K562 (cell line): ENCODE measurements at regions of chr4 and their contacts with region 1.

Region 1: GRCh38 chr4:74531963-74532794 is 87.2 kb downstream of the AREG start:
- DNase-seq: peak; percentile 16 to 82 (median 45)
- ATAC-seq: peak; percentile 93
- H3K4me3 ChIP-seq: no peak overlapping the region
- H3K27ac ChIP-seq: peak overlapping the region; percentile 49; the same call in 2 of the 3 replicates
- H3K4me1 ChIP-seq: peaks cover 0 to 12% of the 10 kb centered on the region in 2 experiments; a peak in 1 of 5 replicates
- H3K27me3 ChIP-seq: no peaks in the 10 kb centered on the region
- CTCF ChIP-seq: peak; percentile 79 to 99 (median 98)
- EP300 ChIP-seq: peak; percentile 89
- POLR2A ChIP-seq: no peak
- RAD21 ChIP-seq: peak; percentile 95 to 96

Region 2: GRCh38 chr4:74311696-74312313 is 220.4 kb before region 1 on chr4:
- CTCF ChIA-PET with region 1: no interaction called
- POLR2A ChIA-PET with region 1: no interaction called
- in situ Hi-C with region 1: loop called (anchors 10 kb)
- intact Hi-C with region 1: no loop called
- DNase-seq: peak in 1 of 4 experiments; percentile 67
- ATAC-seq: peak; percentile 76
- H3K4me3 ChIP-seq: no peak overlapping the region
- H3K27ac ChIP-seq: no peak overlapping the region
- H3K4me1 ChIP-seq: no peaks in the 10 kb centered on the region; a peak in 1 of 5 replicates
- H3K27me3 ChIP-seq: no peaks in the 10 kb centered on the region
- CTCF ChIP-seq: peak; percentile 50 to 81 (median 59); a peak in 5 of 6 replicates
- EP300 ChIP-seq: no peak
- POLR2A ChIP-seq: no peak
- RAD21 ChIP-seq: peak; percentile 78 to 83

Region 3: GRCh38 chr4:74370912-74371311 is 161.3 kb before region 1 on chr4:
- CTCF ChIA-PET with region 1: interaction called, 20 read pairs
- POLR2A ChIA-PET with region 1: interaction called, 3 read pairs
- in situ Hi-C with region 1: loop called (anchors 10 kb)
- intact Hi-C with region 1: no loop called
- DNase-seq: peak; percentile 23 to 85 (median 44)
- ATAC-seq: peak; percentile 84
- H3K4me3 ChIP-seq: no peak overlapping the region
- H3K27ac ChIP-seq: peak overlapping the region; percentile 37; the same call in 1 of the 3 replicates
- H3K4me1 ChIP-seq: peaks cover 0 to 15% of the 10 kb centered on the region in 2 experiments; a peak in 2 of 5 replicates
- H3K27me3 ChIP-seq: no peaks in the 10 kb centered on the region
- CTCF ChIP-seq: peak; percentile 82 to 85 (median 82)
- EP300 ChIP-seq: no peak
- POLR2A ChIP-seq: no peak
- RAD21 ChIP-seq: peak; percentile 78 to 81

Region 4: GRCh38 chr4:74444891-74445642 is 87.1 kb before region 1 on chr4 and contains the start of gene AREG:
- CTCF ChIA-PET with region 1: no interaction called
- POLR2A ChIA-PET with region 1: no interaction called
- in situ Hi-C with region 1: no loop called
- intact Hi-C with region 1: loop called (anchors 1 kb)
- DNase-seq: peak; percentile 78 to 91 (median 84)
- ATAC-seq: peak; percentile 83
- H3K4me3 ChIP-seq: peak within 1 kb of the TSS; percentile 57
- H3K27ac ChIP-seq: peak within 1 kb of the TSS; percentile 74
- H3K4me1 ChIP-seq: peaks cover 7 to 31% of the 10 kb centered on the region in 2 experiments; a peak in 3 of 5 replicates
- H3K27me3 ChIP-seq: no peaks in the 10 kb centered on the region
- CTCF ChIP-seq: peak; percentile 69 to 87 (median 69)
- EP300 ChIP-seq: no peak
- POLR2A ChIP-seq: peak; percentile 62
- RAD21 ChIP-seq: peak in 1 of 2 experiments; percentile 56; a peak in 2 of 4 replicates
- polyA plus RNA-seq, gene AREG: 1.4 to 2.4 TPM

Region 5: GRCh38 chr4:74549936-74550335 is 17.8 kb after region 1 on chr4:
- CTCF ChIA-PET with region 1: no interaction called
- POLR2A ChIA-PET with region 1: no interaction called
- in situ Hi-C with region 1: no loop called
- intact Hi-C with region 1: no loop called
- DNase-seq: no peak
- ATAC-seq: no peak
- H3K4me3 ChIP-seq: no peak overlapping the region
- H3K27ac ChIP-seq: no peak overlapping the region
- H3K4me1 ChIP-seq: no peaks in the 10 kb centered on the region; a peak in 1 of 5 replicates
- H3K27me3 ChIP-seq: no peaks in the 10 kb centered on the region
- CTCF ChIP-seq: no peak
- EP300 ChIP-seq: no peak
- POLR2A ChIP-seq: no peak
- RAD21 ChIP-seq: no peak

Region 6: DNA sequence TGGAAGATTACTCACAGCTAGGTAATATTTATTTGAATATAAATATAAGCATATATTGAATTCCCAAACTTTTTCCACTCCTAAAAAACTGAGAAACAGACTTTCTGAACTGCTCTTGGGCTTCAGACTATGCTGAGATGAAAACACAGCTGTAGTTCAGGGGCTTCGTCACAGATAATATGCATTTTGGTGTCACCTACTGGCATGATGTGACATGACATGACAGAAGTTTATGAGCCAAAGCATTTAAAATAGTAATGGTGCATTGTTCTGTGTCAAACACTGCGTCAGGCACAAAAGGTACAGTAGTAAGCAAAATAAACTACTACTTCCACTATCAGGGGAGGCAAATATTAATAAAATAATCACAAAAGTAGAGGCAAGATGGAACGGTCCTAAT is 90.9 kb after region 1 on chr4:
- CTCF ChIA-PET with region 1: interaction called, 4 read pairs
- POLR2A ChIA-PET with region 1: no interaction called
- in situ Hi-C with region 1: no loop called
- intact Hi-C with region 1: loop called (anchors 1 kb)
- DNase-seq: peak; percentile 53 to 77 (median 59)
- ATAC-seq: peak; percentile 95
- H3K4me3 ChIP-seq: no peak overlapping the region
- H3K27ac ChIP-seq: no peak overlapping the region
- H3K4me1 ChIP-seq: peaks cover 0 to 8% of the 10 kb centered on the region in 2 experiments; a peak in 2 of 5 replicates
- H3K27me3 ChIP-seq: no peaks in the 10 kb centered on the region
- CTCF ChIP-seq: peak; percentile 73 to 79 (median 76)
- EP300 ChIP-seq: no peak
- POLR2A ChIP-seq: no peak
- RAD21 ChIP-seq: peak; percentile 88 to 90

Region 7: GRCh38 chr4:74671080-74671698 is 139.0 kb after region 1 on chr4:
- CTCF ChIA-PET with region 1: interaction called, 4 read pairs
- POLR2A ChIA-PET with region 1: no interaction called
- in situ Hi-C with region 1: loop called (anchors 10 kb)
- intact Hi-C with region 1: loop called (anchors 2 kb)
- DNase-seq: peak; percentile 10 to 74 (median 37)
- ATAC-seq: peak; percentile 87
- H3K4me3 ChIP-seq: no peak overlapping the region
- H3K27ac ChIP-seq: no peak overlapping the region
- H3K4me1 ChIP-seq: no peaks in the 10 kb centered on the region
- H3K27me3 ChIP-seq: no peaks in the 10 kb centered on the region
- CTCF ChIP-seq: peak; percentile 70 to 90 (median 71)
- EP300 ChIP-seq: no peak
- POLR2A ChIP-seq: no peak
- RAD21 ChIP-seq: peak; percentile 88 to 92